ENCODE measurements at regions of chr5 and their contacts with region 1.

Region 1: GRCh38 chr5:151126199-151126645 is 31.4 kb downstream of the ANXA6 start:
- DNase-seq: peak; percentile 47
- H3K4me3 Mint-ChIP-seq: no peak overlapping the region
- H3K27ac Mint-ChIP-seq: peak overlapping the region; percentile 62
- H3K4me1 Mint-ChIP-seq: peaks cover 41% of the 10 kb centered on the region
- H3K27me3 Mint-ChIP-seq: no peaks in the 10 kb centered on the region

Region 2: GRCh38 chr5:151141535-151141934 is 15.3 kb after region 1 on chr5:
- intact Hi-C with region 1: loop called (anchors 2 kb)
- DNase-seq: no peak
- H3K4me3 Mint-ChIP-seq: peak overlapping the region; percentile 66
- H3K27ac Mint-ChIP-seq: peak overlapping the region; percentile 68
- H3K4me1 Mint-ChIP-seq: peaks cover 78% of the 10 kb centered on the region
- H3K27me3 Mint-ChIP-seq: no peaks in the 10 kb centered on the region

Region 3: GRCh38 chr5:151164686-151165392 is 38.6 kb after region 1 on chr5:
- intact Hi-C with region 1: loop called (anchors 1 kb)
- DNase-seq: peak; percentile 69
- H3K4me3 Mint-ChIP-seq: no peak overlapping the region
- H3K27ac Mint-ChIP-seq: no peak overlapping the region
- H3K4me1 Mint-ChIP-seq: peaks cover 6% of the 10 kb centered on the region
- H3K27me3 Mint-ChIP-seq: peaks cover 2% of the 10 kb centered on the region

Region 4: DNA sequence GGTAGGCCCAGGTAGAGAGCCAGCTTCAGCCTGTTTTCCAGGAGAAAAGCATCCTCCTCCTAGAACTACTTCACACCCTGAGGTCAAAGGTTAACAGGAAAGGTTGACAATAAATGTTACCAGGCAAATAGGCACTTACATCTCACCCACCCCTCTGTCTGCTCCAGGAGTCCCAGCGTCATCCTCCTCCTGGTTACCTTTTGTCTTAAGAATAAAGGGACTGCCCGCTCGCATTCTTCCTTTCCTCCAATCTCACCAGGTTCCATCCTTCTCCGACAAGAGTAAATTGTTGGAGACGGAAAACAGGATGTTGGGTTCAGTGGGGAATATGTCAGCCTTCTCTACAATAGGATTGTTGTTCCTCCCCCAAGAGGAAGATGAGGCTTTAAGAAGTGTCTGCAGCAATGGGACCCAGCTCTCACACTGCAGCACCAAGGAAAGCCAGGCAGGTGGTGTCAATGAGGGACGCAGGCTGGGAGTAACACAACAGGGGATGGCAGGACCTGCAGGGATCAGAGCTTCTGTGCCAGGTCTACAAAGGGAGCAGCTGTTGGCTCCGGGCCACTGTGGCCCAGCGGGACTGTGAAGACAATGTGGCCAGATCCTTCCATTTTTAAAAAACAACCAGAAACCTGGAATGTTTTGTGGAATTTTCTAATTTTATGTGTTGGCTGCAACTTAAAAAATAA is 435.9 kb after region 1 on chr5:
- intact Hi-C with region 1: no loop called
- DNase-seq: no peak
- H3K4me3 Mint-ChIP-seq: no peak overlapping the region
- H3K27ac Mint-ChIP-seq: no peak overlapping the region
- H3K4me1 Mint-ChIP-seq: no peaks in the 10 kb centered on the region
- H3K27me3 Mint-ChIP-seq: no peaks in the 10 kb centered on the region